Gastrocnemius medialis (tissue), 4 donors: ENCODE measurements at regions of chr1 and their contacts with region 1.

Region 1: DNA sequence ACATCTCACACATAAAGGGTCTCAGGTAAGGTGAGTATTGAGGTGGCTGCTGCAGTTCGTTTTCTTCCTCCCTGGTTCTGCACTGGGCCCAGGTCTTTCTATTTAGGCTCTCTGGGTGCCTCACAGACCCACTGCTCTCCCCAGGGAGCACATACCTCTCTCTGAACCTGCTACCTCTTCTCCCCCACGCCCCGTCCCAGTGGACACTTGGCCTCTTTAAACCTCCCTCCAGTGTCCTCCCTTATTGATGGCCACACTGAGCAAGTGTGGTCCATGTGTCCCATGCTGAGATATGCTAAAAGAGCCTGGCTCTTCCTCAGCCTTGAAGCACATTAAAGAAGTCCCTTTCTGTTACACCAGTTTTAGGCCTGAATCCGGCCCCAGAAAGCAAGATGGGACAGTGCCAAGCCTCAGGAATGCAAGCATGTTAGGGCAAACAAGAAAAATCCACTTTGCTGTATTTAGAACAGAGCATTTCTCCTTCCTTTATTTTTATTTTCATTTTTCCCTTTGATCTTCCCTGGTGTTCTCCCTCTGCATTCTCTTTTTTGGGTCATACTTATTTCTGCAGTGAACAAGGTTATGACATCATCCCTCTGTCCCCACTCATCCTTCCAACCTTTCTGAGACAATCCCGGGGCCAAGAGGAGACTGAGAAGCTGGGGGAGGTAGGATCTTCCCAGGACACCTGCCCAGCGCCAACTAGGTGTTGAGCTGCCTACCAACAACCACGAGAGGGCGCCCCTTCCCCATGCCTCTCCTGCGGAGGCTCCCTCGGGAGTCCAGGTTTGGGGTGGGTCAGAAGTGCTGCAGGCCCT is 5.0 kb upstream of the CHI3L2 start:
- DNase-seq: peak in 1 of 2 donors; percentile 41
- ATAC-seq: peak in 1 of 2 donors; percentile 62
- H3K4me3 ChIP-seq: no peak overlapping the region
- H3K27ac ChIP-seq: no peak overlapping the region
- H3K4me1 ChIP-seq: no peaks in the 10 kb centered on the region
- H3K27me3 ChIP-seq: no peaks in the 10 kb centered on the region
- CTCF ChIP-seq: peak; percentile 50 to 79 (median 74)
- POLR2A ChIP-seq: no peak

Region 2: GRCh38 chr1:111320106-111320879 is 97.8 kb after region 1 on chr1:
- in situ Hi-C with region 1: loop called in 1 of 4 experiments (anchors 10 kb)
- intact Hi-C with region 1: no loop called
- DNase-seq: no peak
- ATAC-seq: no peak
- H3K4me3 ChIP-seq: no peak overlapping the region
- H3K27ac ChIP-seq: no peak overlapping the region
- H3K4me1 ChIP-seq: no peaks in the 10 kb centered on the region
- H3K27me3 ChIP-seq: no peaks in the 10 kb centered on the region
- CTCF ChIP-seq: no peak
- POLR2A ChIP-seq: no peak

Region 3: GRCh38 chr1:111342471-111342870 is 120.0 kb after region 1 on chr1:
- in situ Hi-C with region 1: no loop called
- intact Hi-C with region 1: no loop called
- DNase-seq: no peak
- ATAC-seq: no peak
- H3K4me3 ChIP-seq: no peak overlapping the region
- H3K27ac ChIP-seq: no peak overlapping the region
- H3K4me1 ChIP-seq: peaks cover 0 to 9% of the 10 kb centered on the region in 2 donors
- H3K27me3 ChIP-seq: no peaks in the 10 kb centered on the region
- CTCF ChIP-seq: no peak
- POLR2A ChIP-seq: no peak

Region 4: GRCh38 chr1:111399792-111400610 is 177.5 kb after region 1 on chr1:
- in situ Hi-C with region 1: loop called (anchors 10 kb)
- intact Hi-C with region 1: loop called (anchors 2 kb)
- DNase-seq: no peak
- ATAC-seq: no peak
- H3K4me3 ChIP-seq: no peak overlapping the region
- H3K27ac ChIP-seq: no peak overlapping the region
- H3K4me1 ChIP-seq: no peaks in the 10 kb centered on the region
- H3K27me3 ChIP-seq: no peaks in the 10 kb centered on the region
- CTCF ChIP-seq: peak in 3 of 5 experiments; percentile 35 to 56 (median 52)
- POLR2A ChIP-seq: no peak